Dendritic cell treated with granulocyte-macrophage colony-stimulating factor and Interleukin-4, amounts not matched to agents 40 ng/mL and 50 ng/mL, for 4 days (primary cell): ENCODE measurements at regions of chr22 and their contacts with region 1.

Region 1: DNA sequence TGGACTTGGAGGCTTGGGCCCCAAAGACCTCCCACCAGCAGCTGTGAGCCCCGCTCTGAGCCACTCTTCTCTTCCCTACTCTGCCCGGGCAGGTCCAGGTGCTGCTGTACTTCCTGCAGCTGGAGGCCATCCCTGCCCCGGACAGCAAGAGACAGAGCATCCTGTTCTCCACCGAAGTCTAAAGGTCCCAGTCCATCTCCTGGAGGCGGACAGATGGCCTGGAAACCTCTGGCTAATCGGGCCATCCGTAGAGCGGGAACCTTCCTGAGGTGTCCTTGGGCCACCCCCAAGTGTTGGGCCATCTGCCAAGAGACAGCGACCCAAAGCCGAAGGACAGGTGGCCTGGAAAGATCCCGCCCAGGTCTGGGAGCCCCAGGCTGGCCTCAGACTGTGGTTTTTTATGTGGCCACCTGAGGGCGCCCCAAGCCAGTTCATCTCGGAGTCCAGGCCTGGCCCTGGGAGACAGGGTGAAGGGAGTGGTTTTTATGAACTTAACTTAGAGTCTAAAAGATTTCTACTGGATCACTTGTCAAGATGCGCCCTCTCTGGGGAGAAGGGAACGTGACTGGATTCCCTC is 135.1 kb downstream of the BCR start:
- H3K4me3 Mint-ChIP-seq: no peak overlapping the region
- H3K27ac Mint-ChIP-seq: no peak overlapping the region
- H3K4me1 Mint-ChIP-seq: no peaks in the 10 kb centered on the region
- H3K27me3 Mint-ChIP-seq: no peaks in the 10 kb centered on the region

Region 2: DNA sequence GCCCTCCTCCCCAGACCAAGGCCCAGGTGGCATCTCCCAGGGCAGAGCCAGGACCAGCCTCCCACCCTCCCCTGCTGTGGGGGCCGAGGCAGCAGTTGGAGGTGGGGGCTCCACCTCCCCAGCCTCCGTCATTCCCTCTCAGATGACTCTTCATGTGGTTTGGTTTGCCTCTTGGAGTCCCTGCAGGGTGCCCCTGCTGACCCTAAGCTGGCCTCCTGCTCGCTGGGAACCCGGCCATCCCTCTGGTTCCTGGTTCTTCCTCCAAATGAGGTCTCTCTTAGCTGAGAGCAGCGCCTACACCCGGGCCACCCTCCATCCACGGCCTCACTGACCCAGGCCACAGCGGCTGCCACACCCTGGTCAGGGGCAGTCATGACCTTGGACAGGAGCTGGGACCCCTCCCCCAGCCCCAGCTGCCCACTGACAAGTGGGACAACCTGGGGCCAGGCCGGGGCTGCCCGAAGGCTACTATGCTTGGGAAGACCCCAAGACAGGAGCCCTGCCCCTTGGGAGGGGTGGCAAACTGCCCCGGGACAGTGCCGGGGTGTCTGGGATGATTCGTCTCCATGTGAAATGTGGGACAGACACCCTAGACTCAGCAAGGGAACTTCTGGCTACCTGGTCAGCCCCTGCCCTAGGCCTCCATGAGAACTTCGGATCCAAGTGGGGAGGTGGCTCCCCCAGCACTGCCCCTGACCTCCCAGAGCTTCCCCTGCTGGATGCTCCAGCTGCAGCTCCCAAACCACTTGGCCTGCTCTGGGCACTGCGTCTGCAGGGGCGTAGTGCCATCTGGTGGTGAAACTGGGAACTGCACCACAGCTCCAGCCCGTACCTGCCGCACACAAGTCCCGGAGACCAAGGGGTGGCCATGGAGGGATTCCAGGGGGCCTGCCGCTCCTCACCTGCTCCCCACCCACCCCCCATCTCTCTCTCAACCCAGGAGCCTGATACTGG is 70.1 kb after region 1 on chr22:
- intact Hi-C with region 1: loop called (anchors 1 kb)
- H3K4me3 Mint-ChIP-seq: no peak overlapping the region
- H3K27ac Mint-ChIP-seq: no peak overlapping the region
- H3K4me1 Mint-ChIP-seq: peaks cover 9% of the 10 kb centered on the region
- H3K27me3 Mint-ChIP-seq: peaks cover 3% of the 10 kb centered on the region